Lower leg skin (tissue), 4 donors: ENCODE measurements at regions of chr10 and their contacts with region 1.

Region 1: GRCh38 chr10:74034301-74034700 is 36.4 kb downstream of the VCL start:
- DNase-seq: no peak
- H3K4me3 ChIP-seq: no peak overlapping the region
- CTCF ChIP-seq: no peak
- POLR2A ChIP-seq: no peak

Region 2: DNA sequence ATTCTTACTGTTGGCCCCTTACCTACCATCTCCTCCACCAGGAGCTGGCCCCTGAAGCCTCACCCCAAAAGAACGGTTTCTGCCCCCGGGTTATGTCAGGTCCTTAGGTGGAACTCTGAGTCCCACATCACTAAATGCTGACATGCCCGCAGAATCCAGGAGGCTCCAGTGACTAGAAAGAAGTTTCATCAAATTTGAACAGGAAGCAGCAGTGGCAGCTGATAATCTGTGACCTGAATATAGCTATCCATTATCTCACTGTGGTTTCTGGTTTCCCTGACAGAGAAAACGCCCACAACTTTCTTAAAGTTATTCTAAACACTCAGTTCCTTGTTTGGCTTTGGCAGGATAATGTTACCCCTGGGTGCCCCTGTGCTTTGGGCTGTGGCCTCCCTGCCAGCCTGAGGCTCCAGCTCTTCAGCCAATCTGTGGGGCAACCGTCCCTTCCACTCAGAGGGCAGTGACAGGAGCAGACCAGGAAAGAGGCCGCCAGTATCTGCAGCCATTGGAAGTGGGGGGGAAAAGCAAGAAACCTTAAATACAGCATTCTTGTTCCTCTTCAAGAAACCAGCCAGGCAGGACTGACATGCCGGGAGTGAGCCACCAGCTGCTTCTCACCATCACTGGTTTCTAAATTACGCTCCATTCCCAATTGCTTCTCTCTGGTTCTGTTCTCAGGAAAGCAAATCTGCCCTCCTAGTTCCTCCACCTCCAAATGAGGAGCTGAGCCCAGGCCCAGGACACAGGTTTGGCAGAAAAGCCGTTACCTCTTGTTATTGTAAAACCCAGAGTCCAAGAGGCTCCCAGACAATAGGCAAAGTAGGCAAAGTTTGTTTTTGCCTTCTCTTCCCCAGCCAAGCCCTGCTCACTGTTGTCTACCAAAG is 77.6 kb before region 1 on chr10:
- intact Hi-C with region 1: no loop called
- DNase-seq: no peak
- H3K4me3 ChIP-seq: no peak overlapping the region
- CTCF ChIP-seq: no peak
- POLR2A ChIP-seq: no peak

Region 3: GRCh38 chr10:74067373-74068352 is 33.4 kb after region 1 on chr10:
- intact Hi-C with region 1: loop called (anchors 5 kb)
- DNase-seq: no peak
- H3K4me3 ChIP-seq: no peak overlapping the region
- CTCF ChIP-seq: no peak
- POLR2A ChIP-seq: no peak

Region 4: GRCh38 chr10:74096777-74097176 is 62.5 kb after region 1 on chr10:
- intact Hi-C with region 1: no loop called
- DNase-seq: no peak
- H3K4me3 ChIP-seq: no peak overlapping the region
- CTCF ChIP-seq: no peak
- POLR2A ChIP-seq: no peak